ENCODE measurements at regions of chr11 and their contacts with region 1.

Region 1: DNA sequence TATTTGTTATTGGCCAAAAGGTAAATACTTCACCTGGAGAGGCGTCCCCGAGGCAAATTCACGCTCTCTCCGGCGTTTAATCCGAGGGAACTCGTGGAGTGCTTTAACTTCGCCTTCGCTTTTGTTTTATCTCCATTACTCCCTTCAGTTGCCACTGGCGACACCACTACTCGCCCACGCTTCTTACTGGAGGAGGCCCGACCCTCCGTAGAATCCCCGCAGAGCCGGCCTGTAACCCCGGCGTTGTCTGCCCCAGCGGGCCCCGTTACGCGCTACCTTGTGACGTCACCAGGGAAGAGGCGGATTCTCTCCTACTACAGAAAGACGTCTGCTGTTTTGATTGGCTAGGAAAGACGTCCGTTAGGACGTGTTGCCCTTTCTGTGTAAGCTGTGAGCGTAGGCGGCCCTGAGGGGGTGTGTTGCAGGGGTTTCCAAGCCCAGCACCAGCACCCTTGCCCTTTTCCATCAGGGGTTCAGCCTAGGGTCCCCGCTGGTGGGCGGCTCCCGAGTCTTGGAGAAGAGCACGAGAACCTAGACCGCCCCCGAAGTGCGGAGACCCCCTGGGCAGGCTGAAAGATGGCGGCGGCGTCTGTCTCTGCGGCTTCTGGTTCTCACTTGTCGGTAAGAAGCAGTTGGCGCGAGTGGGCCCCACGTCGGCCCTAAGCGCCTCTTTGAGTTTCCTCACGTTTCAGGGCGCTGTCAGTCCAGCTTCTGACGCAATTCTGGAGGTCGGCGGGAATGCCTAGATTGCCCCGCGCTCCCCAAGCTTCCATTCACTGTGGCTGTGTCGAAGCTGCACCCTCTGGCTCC is at the start of gene CEP57:
- DNase-seq: peak; percentile 89 to 98
- ATAC-seq: peak; percentile 58 to 75 (median 62)
- H3K4me3 ChIP-seq: peak within 1 kb of the TSS; percentile 84
- H3K4me3 Mint-ChIP-seq: peak within 1 kb of the TSS; percentile 100
- H3K27ac ChIP-seq: peak within 1 kb of the TSS; percentile 95
- H3K27ac Mint-ChIP-seq: peak within 1 kb of the TSS; percentile 100
- H3K4me1 ChIP-seq: peaks cover 11% of the 10 kb centered on the region
- H3K4me1 Mint-ChIP-seq: peaks cover 59 to 60% of the 10 kb centered on the region in 2 donors
- H3K27me3 ChIP-seq: no peaks in the 10 kb centered on the region
- H3K27me3 Mint-ChIP-seq: no peaks in the 10 kb centered on the region
- CTCF ChIP-seq: no peak
- total RNA-seq, gene CEP57: 40.8 to 64.9 (median 55.1) TPM

Region 2: GRCh38 chr11:94493281-94494125 is 1296.8 kb before region 1 on chr11 and contains the starts of genes ANKRD49 and MRE11:
- intact Hi-C with region 1: loop called (anchors 10 kb)
- DNase-seq: peak; percentile 97 to 99
- ATAC-seq: peak; percentile 99 to 100 (median 99)
- H3K4me3 ChIP-seq: peak within 1 kb of the TSS; percentile 64
- H3K4me3 Mint-ChIP-seq: peak within 1 kb of the TSS; percentile 95
- H3K27ac ChIP-seq: peak within 1 kb of the TSS; percentile 75
- H3K27ac Mint-ChIP-seq: peak within 1 kb of the TSS; percentile 93 to 94
- H3K4me1 ChIP-seq: no peaks in the 10 kb centered on the region
- H3K4me1 Mint-ChIP-seq: peaks cover 33 to 34% of the 10 kb centered on the region in 2 donors
- H3K27me3 ChIP-seq: no peaks in the 10 kb centered on the region
- H3K27me3 Mint-ChIP-seq: no peaks in the 10 kb centered on the region
- CTCF ChIP-seq: no peak
- total RNA-seq, gene ANKRD49: 47.7 to 55.6 (median 52.6) TPM
- total RNA-seq, gene MRE11: 42.1 to 45.2 (median 43.8) TPM

Region 3: GRCh38 chr11:94973099-94973968 is 817.0 kb before region 1 on chr11 and contains the starts of genes CWC15 and KDM4D:
- intact Hi-C with region 1: loop called (anchors 1 kb)
- DNase-seq: peak; percentile 88 to 97
- ATAC-seq: peak; percentile 98 to 100 (median 99)
- H3K4me3 ChIP-seq: peak within 1 kb of the TSS; percentile 68
- H3K4me3 Mint-ChIP-seq: peak within 1 kb of the TSS; percentile 99
- H3K27ac ChIP-seq: peak within 1 kb of the TSS; percentile 71
- H3K27ac Mint-ChIP-seq: peak within 1 kb of the TSS; percentile 91 to 98
- H3K4me1 ChIP-seq: peaks cover 4% of the 10 kb centered on the region
- H3K4me1 Mint-ChIP-seq: peaks cover 25 to 35% of the 10 kb centered on the region in 2 donors
- H3K27me3 ChIP-seq: no peaks in the 10 kb centered on the region
- H3K27me3 Mint-ChIP-seq: peaks cover 15 to 17% of the 10 kb centered on the region in 2 donors
- CTCF ChIP-seq: no peak
- total RNA-seq, gene CWC15: 76.8 to 90.7 (median 81.3) TPM
- total RNA-seq, gene KDM4D: 0.14 to 0.32 TPM in 2 of 3 donors, not detected in the other

Region 4: GRCh38 chr11:95067039-95067840 is 723.1 kb before region 1 on chr11:
- intact Hi-C with region 1: loop called (anchors 2 kb)
- DNase-seq: peak; percentile 67 to 86
- ATAC-seq: peak; percentile 72 to 82 (median 74)
- H3K4me3 ChIP-seq: peak overlapping the region; percentile 74
- H3K4me3 Mint-ChIP-seq: peak overlapping the region; percentile 99
- H3K27ac ChIP-seq: peak overlapping the region; percentile 87
- H3K27ac Mint-ChIP-seq: peak overlapping the region; percentile 97 to 99
- H3K4me1 ChIP-seq: peaks cover 6% of the 10 kb centered on the region
- H3K4me1 Mint-ChIP-seq: peaks cover 36 to 38% of the 10 kb centered on the region in 2 donors
- H3K27me3 ChIP-seq: no peaks in the 10 kb centered on the region
- H3K27me3 Mint-ChIP-seq: peaks cover 0 to 5% of the 10 kb centered on the region in 2 donors
- CTCF ChIP-seq: no peak

Region 5: DNA sequence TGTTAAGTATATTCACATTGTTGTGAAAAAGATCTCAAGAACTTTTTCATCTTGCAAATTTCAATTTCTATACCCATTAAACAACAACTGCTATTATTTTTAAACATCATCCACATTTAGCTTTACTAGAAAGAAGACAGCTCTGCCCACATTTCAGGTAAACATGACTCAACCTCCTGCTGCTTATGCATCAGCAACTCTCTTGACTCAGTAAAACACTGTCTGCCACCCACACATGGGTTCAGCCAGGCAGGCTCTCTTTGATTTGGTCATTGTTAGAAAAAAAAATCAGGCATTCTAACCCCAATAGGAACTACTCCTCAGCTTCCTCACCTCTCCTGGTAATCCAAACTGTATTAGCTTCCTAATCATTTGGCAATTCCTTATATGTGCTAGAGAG is 705.8 kb before region 1 on chr11:
- intact Hi-C with region 1: loop called (anchors 5 kb)
- DNase-seq: no peak
- ATAC-seq: no peak
- H3K4me3 ChIP-seq: no peak overlapping the region
- H3K4me3 Mint-ChIP-seq: no peak overlapping the region
- H3K27ac ChIP-seq: no peak overlapping the region
- H3K27ac Mint-ChIP-seq: no peak overlapping the region
- H3K4me1 ChIP-seq: peaks cover 12% of the 10 kb centered on the region
- H3K4me1 Mint-ChIP-seq: peaks cover 11 to 12% of the 10 kb centered on the region in 2 donors
- H3K27me3 ChIP-seq: no peaks in the 10 kb centered on the region
- H3K27me3 Mint-ChIP-seq: peaks cover 2 to 7% of the 10 kb centered on the region in 2 donors
- CTCF ChIP-seq: no peak

Region 6: DNA sequence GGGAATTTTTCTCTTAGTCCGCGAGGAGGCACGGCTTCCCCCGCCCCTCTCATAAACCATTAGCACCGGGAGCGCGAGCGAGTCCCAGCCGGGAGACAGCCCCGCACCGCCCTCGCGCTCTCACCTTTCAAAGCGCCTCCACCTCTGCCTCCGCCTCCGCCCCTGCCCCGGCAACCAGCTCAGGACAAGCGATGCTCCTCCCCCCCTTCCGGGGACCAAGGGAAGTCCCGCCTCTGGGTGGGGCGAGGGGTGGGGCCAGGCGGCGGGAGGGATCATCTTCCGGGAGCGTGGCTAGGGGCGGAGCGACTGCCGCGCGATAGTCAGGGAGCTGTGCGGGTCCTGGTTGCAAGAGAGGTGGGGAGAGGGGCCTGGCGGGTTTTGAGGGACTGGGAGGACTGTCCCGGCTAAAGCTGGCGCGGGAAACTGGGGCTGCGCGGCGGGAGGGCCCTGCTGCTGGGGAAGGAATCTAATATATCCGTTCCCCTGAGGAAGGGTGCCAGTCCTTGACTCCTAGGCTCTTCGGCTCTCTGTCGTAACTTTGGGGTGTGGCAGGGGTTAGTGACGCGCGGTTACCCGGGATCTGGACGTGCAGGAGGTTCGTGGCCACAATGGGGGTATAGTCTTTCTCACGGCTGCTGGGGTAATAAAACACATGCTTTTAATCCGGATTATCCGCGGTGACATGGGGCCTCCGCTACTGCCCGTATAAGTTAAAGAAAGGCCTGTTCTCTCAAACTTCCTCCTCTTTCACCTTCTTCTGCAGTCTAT is 599.6 kb after region 1 on chr11 and contains the starts of genes CCDC82 and JRKL:
- intact Hi-C with region 1: loop called (anchors 2 kb)
- DNase-seq: peak; percentile 97
- ATAC-seq: peak; percentile 96 to 99 (median 97)
- H3K4me3 ChIP-seq: peak within 1 kb of the TSS; percentile 82
- H3K4me3 Mint-ChIP-seq: peak within 1 kb of the TSS; percentile 95
- H3K27ac ChIP-seq: peak within 1 kb of the TSS; percentile 89
- H3K27ac Mint-ChIP-seq: peak within 1 kb of the TSS; percentile 75 to 95
- H3K4me1 ChIP-seq: peaks cover 8% of the 10 kb centered on the region
- H3K4me1 Mint-ChIP-seq: peaks cover 35 to 54% of the 10 kb centered on the region in 2 donors
- H3K27me3 ChIP-seq: no peaks in the 10 kb centered on the region
- H3K27me3 Mint-ChIP-seq: no peaks in the 10 kb centered on the region
- CTCF ChIP-seq: no peak
- total RNA-seq, gene CCDC82: 36.2 to 42.1 (median 38.0) TPM
- total RNA-seq, gene JRKL: 4.5 to 6.1 (median 5.5) TPM